Naive thymus-derived CD8-positive, alpha-beta T cell (primary cell): ENCODE measurements at regions of chr15 and their contacts with region 1.

Region 1: GRCh38 chr15:66386204-66387123 is at the start of gene MAP2K1:
- DNase-seq: peak; percentile 94 to 99 (median 98)
- ATAC-seq: peak; percentile 83 to 89
- H3K4me3 Mint-ChIP-seq: peak within 1 kb of the TSS; percentile 87 to 100 (median 99)
- H3K27ac Mint-ChIP-seq: peak within 1 kb of the TSS; percentile 93 to 100 (median 98)
- H3K4me1 Mint-ChIP-seq: peaks cover 30 to 63% (median 54%) of the 10 kb centered on the region in 4 donors
- H3K27me3 Mint-ChIP-seq: no peaks in the 10 kb centered on the region
- polyA plus RNA-seq, gene MAP2K1: 34.7 to 41.7 (median 39.3) TPM

Region 2: DNA sequence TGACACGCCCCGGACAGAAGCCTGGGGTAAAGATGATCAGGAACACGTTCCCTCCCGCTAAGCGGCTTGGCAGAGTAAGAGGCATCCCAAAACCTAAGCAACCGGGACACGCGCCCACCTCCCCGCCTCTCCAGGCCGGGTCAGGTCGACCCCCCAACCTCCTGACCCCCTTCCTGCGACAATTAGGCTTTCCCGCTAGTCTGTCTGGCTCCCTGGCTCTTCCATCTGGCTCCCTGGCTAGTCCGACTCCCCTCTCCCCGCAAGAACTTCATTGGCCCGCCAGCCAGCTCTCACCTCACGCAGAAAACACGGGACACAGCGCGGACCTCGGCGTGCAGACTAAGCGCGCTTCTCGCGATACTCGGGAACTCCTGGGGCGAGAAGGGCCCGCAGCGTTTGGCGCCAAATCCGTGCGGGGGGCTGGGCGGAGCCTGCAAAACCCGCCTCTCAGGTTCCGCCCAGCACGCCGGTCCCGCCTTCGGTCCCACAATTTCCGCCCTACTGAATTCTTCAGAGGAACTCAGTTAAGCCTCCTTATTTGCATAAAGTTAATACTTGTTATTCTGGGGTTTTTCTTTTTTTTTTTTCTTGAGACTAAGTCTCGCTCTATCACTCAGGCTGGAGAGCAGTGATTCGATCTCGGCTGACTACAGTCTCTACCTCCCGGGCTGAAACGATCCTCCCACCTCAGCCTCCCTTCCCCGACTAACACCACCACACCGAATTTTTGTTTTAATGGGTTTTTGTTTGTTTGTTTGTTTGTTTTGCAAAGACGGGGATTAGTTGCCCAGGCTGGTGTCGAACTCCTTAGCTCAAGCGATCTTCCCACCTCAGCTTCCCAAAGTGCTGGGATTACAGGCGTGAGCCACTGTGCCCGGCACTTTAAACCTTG is 29.9 kb before region 1 on chr15 and contains the start of gene TIPIN:
- POLR2A ChIA-PET with region 1: interaction called, 10 read pairs
- DNase-seq: peak; percentile 89 to 97 (median 96)
- ATAC-seq: peak; percentile 95 to 96
- H3K4me3 Mint-ChIP-seq: peak within 1 kb of the TSS; percentile 94 to 100 (median 98)
- H3K27ac Mint-ChIP-seq: peak within 1 kb of the TSS; percentile 93 to 98 (median 97)
- H3K4me1 Mint-ChIP-seq: peaks cover 17 to 31% (median 24%) of the 10 kb centered on the region in 4 donors
- H3K27me3 Mint-ChIP-seq: no peaks in the 10 kb centered on the region
- polyA plus RNA-seq, gene TIPIN: 9.0 to 12.1 (median 10.3) TPM